ENCODE measurements at regions of chr5 and their contacts with region 1.

Region 1: DNA sequence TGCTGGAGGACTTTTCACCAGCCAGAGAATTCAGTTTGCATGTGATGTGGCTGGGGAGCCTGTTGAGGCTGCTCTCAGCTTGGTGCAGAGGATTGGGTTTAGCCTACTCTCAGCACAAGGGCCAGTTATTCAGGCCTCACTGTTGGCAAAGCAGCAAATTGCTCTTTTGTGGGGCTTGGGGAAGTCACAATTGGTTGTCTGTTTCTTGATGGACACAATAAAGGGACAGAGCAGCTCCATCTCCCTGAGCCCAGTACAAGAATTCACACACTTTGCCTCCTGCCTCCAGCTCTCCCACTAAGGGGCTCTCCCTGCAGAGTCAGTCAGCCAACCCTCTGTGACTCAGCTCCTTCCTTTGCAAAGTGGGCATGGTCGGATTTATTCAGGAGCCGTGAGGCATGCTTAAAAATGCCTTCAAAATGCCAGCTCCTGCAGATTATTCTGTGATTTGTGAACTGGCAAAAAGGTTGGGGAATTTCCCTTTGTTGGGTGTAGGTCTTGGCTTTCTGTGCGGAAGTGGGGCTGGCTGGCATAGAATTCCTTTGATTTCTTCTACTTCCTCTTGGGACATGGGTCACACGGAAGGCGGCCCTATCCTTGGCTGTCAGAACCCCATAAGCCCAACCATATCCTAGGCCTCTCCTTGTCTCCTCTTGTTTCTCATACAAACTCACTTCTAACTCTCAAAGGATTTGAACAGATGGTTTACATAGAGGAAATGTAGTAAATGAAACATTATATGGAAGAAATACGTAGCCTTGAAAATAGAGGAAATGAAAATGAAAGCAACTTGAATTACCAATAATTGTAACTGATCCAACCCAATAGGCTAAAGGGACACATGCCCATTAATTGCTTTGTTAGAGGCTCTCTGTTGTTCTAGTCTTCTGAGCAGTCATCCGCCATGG is 118.7 kb upstream of the CD180 start:
- DNase-seq: peak; percentile 20 to 93 (median 84)
- H3K4me3 ChIP-seq: peak overlapping the region in 10 of 59 donors; percentile 1 to 35 (median 12)
- H3K27ac ChIP-seq: peak overlapping the region; percentile 35 to 98 (median 92)
- H3K27me3 ChIP-seq: no peaks in the 10 kb centered on the region
- CTCF ChIP-seq: peak in 35 of 56 donors; percentile 10 to 57 (median 29)

Region 2: GRCh38 chr5:67268231-67269021 is 46.9 kb before region 1 on chr5:
- intact Hi-C with region 1: loop called (anchors 1 to 10 kb)
- DNase-seq: peak; percentile 44 to 81 (median 64)
- H3K4me3 ChIP-seq: peak overlapping the region in 43 of 59 donors; percentile 4 to 50 (median 23)
- H3K27ac ChIP-seq: peak overlapping the region; percentile 88 to 100 (median 99)
- H3K27me3 ChIP-seq: no peaks in the 10 kb centered on the region
- CTCF ChIP-seq: peak in 6 of 56 donors; percentile 4 to 39 (median 15)

Region 3: DNA sequence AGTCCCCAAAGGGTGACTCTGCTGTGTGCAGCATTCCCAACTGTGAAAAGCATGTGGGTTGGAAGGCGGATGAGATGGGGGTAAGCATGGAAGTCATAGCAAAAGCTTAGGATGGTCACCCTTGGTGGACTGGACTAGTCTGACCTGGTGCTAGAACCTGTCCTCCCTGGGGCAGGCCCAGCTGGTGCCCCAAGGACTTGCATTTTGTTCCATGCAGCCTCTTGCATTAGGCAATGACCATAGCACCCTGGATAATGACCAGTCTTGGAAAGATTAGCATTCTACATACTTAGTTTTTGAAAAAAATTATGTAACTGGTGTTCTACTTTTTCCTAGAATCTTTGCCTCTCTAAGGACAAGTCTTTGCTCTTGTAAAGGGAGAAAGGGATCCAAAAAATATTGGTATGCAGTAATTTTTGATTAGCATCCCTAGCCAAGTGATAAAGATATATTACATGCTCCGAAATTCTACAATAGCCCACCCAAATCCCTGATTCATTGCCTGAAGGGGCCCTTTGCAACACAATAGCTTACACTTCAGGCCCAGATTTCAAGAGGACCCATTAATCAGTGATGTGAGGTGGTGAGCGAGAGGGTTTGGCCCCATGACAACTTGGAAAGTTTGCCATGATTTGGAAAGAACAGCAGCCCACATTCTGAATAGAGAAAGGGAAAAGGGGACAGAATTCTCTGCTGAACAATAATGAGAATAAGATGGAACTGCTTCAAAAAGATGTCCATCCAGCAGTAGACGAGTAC is 25.4 kb before region 1 on chr5:
- intact Hi-C with region 1: loop called in 1 of 2 experiments (anchors 2 kb)
- DNase-seq: no peak
- H3K4me3 ChIP-seq: no peak overlapping the region
- H3K27ac ChIP-seq: peak overlapping the region; percentile 50 to 99 (median 95)
- H3K27me3 ChIP-seq: no peaks in the 10 kb centered on the region
- CTCF ChIP-seq: no peak

Region 4: DNA sequence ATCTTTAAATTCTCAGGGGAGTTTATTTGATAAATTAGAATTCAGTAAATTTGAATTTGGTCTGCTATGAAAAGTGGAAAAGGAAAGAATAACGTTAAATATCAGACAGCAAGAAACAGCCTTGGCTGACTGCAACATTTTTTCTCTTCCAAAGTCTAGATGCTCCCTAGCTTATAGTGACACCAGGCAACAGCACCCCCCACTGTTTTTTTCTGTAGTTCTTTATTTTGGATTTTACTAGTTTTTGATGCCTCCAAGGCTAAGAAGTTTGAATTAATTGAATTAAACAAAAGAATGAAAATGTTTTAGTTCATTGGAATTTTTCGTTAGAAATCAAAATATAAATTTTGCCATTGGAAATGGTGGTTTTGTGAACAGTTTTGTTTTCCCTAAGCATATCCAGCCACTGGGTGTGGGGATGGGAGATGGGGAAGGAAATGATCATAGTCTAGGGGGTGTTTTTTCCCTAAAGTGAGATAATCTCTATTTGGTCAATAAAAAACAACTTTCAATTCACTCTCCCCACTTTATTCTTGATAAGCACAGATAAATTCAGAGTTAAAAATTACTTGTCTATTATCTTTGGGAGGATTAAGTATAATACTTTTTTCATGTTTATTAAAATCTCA is 80.6 kb after region 1 on chr5:
- intact Hi-C with region 1: loop called in 1 of 2 experiments (anchors 2 kb)
- DNase-seq: peak in 1 of 10 donors; percentile 15
- H3K4me3 ChIP-seq: peak overlapping the region in 1 of 59 donors; percentile 2
- H3K27ac ChIP-seq: peak overlapping the region in 21 of 59 donors; percentile 14 to 73 (median 41)
- H3K27me3 ChIP-seq: no peaks in the 10 kb centered on the region
- CTCF ChIP-seq: peak in 54 of 56 donors; percentile 21 to 82 (median 54)